Sciatic nerve (tissue), 2 donors: ENCODE measurements at regions of chr12 and their contacts with region 1.

Region 1: GRCh38 chr12:28223025-28223554 is 32.8 kb downstream of the CCDC91 start:
- DNase-seq: no peak
- ATAC-seq: no peak

Region 2: GRCh38 chr12:27133022-27133590 is 1090.0 kb before region 1 on chr12:
- intact Hi-C with region 1: no loop called
- DNase-seq: no peak
- ATAC-seq: no peak

Region 3: GRCh38 chr12:27383429-27384260 is 839.4 kb before region 1 on chr12:
- intact Hi-C with region 1: loop called (anchors 10 kb)
- DNase-seq: peak; percentile 78
- ATAC-seq: peak; percentile 58

Region 4: DNA sequence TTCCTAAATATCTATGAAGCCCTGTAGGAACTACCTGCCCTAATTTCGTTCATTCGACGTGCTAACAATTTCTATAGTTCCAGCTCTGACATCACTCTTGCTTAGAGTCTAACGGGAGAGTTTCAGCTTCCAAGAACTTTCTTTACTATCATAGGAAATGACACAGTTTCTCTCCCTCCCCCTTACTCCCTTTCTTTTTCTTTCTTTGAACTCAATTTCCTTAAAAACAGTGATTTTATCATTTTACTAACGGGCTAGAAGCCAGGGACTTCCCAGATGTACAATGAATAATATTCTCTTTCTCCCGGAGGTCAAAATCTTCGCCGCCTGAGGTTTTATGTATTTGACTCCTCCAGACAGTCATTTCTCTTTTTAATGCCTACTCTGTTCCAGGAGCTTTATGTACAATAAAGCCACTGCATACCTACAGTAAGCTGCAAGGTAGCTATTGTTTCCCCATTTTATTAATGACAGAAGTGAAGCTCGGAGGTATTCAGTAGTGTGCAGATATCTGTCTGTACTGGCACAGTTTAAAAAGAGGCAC is 760.9 kb before region 1 on chr12:
- intact Hi-C with region 1: no loop called
- DNase-seq: no peak
- ATAC-seq: peak; percentile 33

Region 5: GRCh38 chr12:27999521-27999920 is 223.6 kb before region 1 on chr12:
- intact Hi-C with region 1: no loop called
- DNase-seq: no peak
- ATAC-seq: no peak

Region 6: GRCh38 chr12:28369483-28369882 is 146.4 kb after region 1 on chr12:
- intact Hi-C with region 1: no loop called
- DNase-seq: no peak
- ATAC-seq: no peak